CD14-positive monocyte (primary cell): ENCODE measurements at regions of chr9 and their contacts with region 1.

Region 1: GRCh38 chr9:107425101-107426045 is 64.2 kb downstream of the KLF4 start:
- DNase-seq: peak; percentile 43 to 56 (median 56)
- H3K4me3 ChIP-seq: peak overlapping the region; percentile 1 to 74 (median 33)
- H3K4me3 Mint-ChIP-seq: peak overlapping the region; percentile 77 to 87
- H3K27ac ChIP-seq: no peak overlapping the region
- H3K27ac Mint-ChIP-seq: peak overlapping the region in 2 of 7 donors; percentile 35 to 46
- H3K4me1 ChIP-seq: peaks cover 5 to 9% of the 10 kb centered on the region in 2 donors
- H3K4me1 Mint-ChIP-seq: peaks cover 8% of the 10 kb centered on the region
- H3K27me3 ChIP-seq: no peaks in the 10 kb centered on the region
- H3K27me3 Mint-ChIP-seq: peaks cover 2 to 6% (median 3%) of the 10 kb centered on the region in 3 donors
- CTCF ChIP-seq: peak; percentile 98

Region 2: DNA sequence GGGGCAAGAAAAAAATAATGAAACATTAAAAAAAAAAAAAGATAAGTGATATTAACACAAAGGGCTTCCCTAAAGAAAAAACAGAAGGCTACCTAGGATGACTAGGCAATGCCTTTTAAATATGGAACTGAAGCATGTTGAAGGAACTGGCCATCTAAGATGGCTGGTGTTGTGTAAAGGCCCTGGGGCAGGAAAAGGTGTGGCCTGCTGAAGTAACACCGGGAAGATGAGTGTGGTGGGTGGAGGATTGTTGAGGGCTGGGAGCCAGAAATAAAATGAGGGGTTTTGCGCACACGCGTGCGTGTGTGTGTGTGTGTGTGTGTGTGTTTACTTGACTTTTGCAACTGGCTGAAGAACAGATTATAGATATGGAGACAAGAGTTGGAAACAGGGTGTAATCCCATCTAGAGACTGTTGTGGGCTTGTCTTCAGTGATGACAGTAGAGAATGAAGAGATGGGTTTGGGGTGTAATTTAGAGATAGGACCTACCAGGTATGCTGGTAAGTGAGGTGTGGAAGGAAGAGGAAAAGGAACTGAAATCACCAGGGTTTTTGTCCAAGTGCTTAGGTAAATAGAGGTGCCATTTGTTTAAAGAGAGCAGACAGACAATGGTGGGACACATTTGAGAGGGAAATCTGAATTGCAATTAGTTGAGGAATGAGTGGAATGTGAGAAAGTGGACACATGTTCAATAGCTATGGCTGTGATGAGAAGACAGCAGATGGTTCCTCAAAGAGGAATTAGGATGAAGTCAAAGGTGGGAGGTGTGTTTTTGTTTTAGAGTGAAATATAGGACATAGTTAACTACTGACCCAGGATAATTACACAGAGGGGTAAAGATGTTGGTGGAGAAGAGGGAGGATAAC is 108.3 kb before region 1 on chr9:
- intact Hi-C with region 1: no loop called
- DNase-seq: peak; percentile 9 to 31 (median 14)
- H3K4me3 ChIP-seq: no peak overlapping the region
- H3K4me3 Mint-ChIP-seq: no peak overlapping the region
- H3K27ac ChIP-seq: peak overlapping the region in 1 of 2 donors; percentile 35
- H3K27ac Mint-ChIP-seq: peak overlapping the region in 6 of 7 donors; percentile 16 to 87 (median 70)
- H3K4me1 ChIP-seq: peaks cover 7 to 11% of the 10 kb centered on the region in 2 donors
- H3K4me1 Mint-ChIP-seq: peaks cover 19% of the 10 kb centered on the region
- H3K27me3 ChIP-seq: no peaks in the 10 kb centered on the region
- H3K27me3 Mint-ChIP-seq: peaks cover 0 to 1% (median 0%) of the 10 kb centered on the region in 3 donors
- CTCF ChIP-seq: no peak

Region 3: DNA sequence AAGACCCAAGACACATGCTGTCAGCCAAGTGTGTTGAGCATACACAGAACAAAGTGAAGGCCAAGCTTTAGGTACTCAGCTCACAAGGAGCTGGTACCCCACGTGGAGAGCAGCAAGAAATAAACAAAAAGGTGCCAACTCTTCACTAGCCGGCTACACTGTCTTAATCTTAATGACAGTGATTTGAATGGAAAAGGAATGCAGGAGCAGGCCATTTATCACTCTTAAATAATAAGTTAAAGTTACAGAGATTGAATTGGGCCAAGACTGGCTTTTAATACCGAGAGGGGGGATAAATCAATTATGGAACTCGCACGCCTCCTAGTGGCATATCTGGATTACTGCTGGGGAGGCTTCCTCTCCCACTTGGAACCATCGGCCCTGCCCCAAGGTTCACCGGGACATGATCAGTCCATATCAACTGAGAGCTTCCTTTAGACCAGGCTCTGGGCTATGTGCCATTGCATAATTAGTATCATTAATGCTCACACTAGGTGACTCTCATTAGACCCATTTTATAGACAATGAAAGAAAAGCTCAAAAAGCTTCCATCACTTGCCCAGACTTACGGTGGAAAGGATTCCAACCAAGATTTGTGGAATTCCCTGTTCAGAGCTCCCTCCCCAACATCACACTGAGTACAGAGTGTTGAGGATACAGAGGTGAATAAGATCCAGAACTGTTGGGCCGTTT is 1336.4 kb after region 1 on chr9:
- intact Hi-C with region 1: loop called (anchors 5 kb)
- DNase-seq: peak; percentile 48 to 69 (median 56)
- H3K4me3 ChIP-seq: no peak overlapping the region
- H3K4me3 Mint-ChIP-seq: peak overlapping the region in 1 of 2 donors; percentile 26
- H3K27ac ChIP-seq: no peak overlapping the region
- H3K27ac Mint-ChIP-seq: peak overlapping the region in 1 of 7 donors; percentile 55
- H3K4me1 ChIP-seq: peaks cover 7 to 12% of the 10 kb centered on the region in 2 donors
- H3K4me1 Mint-ChIP-seq: peaks cover 17% of the 10 kb centered on the region
- H3K27me3 ChIP-seq: no peaks in the 10 kb centered on the region
- H3K27me3 Mint-ChIP-seq: no peaks in the 10 kb centered on the region
- CTCF ChIP-seq: peak; percentile 97

Region 4: GRCh38 chr9:108953983-108954574 is 1528.7 kb after region 1 on chr9:
- intact Hi-C with region 1: loop called in 1 of 2 experiments (anchors 5 kb)
- DNase-seq: peak in 2 of 3 donors; percentile 20 to 46
- H3K4me3 ChIP-seq: no peak overlapping the region
- H3K4me3 Mint-ChIP-seq: no peak overlapping the region
- H3K27ac ChIP-seq: no peak overlapping the region
- H3K27ac Mint-ChIP-seq: no peak overlapping the region
- H3K4me1 ChIP-seq: no peaks in the 10 kb centered on the region
- H3K4me1 Mint-ChIP-seq: no peaks in the 10 kb centered on the region
- H3K27me3 ChIP-seq: no peaks in the 10 kb centered on the region
- H3K27me3 Mint-ChIP-seq: no peaks in the 10 kb centered on the region
- CTCF ChIP-seq: peak; percentile 79